ENCODE measurements at regions of chr7 and their contacts with region 1.

Region 1: GRCh38 chr7:38660427-38661099 is 29.4 kb upstream of the AMPH start:
- DNase-seq: peak; percentile 56
- ATAC-seq: peak; percentile 94
- H3K4me3 ChIP-seq: no peak overlapping the region
- H3K27ac ChIP-seq: no peak overlapping the region
- H3K4me1 ChIP-seq: no peaks in the 10 kb centered on the region
- H3K27me3 ChIP-seq: no peaks in the 10 kb centered on the region; the same call in 1 of the 2 replicates
- CTCF ChIP-seq: peak; percentile 83
- POLR2A ChIP-seq: no peak
- RAD21 ChIP-seq: peak; percentile 82

Region 2: DNA sequence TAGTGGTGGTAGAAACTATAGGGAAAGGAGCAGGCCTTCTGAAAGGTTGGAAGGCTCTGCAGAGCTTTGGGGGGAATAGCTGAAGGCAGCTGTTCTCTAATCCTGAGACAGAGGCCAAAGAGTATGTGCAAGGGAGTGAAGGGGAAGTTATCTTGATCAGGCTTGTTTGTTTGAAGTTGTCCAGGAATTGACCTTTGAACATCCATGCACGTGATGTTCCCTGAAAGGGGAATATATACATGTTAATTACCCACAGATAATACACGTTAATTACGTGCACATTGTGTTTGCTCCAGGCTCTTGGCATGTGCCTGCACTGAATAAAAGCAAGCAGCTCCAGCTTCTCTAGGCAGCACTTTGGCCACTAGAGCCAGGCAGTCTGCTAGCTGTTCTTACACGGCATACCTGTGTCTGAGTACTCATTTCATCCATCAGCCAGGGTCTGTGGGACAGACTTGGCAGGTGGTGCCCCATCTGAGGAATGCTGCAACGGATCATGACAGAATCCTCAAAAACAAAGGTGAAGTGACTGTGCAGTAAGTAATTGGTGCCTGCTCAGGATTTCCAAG is 500.5 kb before region 1 on chr7:
- CTCF ChIA-PET with region 1: no interaction called
- POLR2A ChIA-PET with region 1: no interaction called
- dilution Hi-C with region 1: no loop called
- in situ Hi-C with region 1: no loop called
- intact Hi-C with region 1: no loop called
- DNase-seq: no peak
- ATAC-seq: no peak
- H3K4me3 ChIP-seq: no peak overlapping the region
- H3K27ac ChIP-seq: no peak overlapping the region
- H3K4me1 ChIP-seq: no peaks in the 10 kb centered on the region
- H3K27me3 ChIP-seq: no peaks in the 10 kb centered on the region
- CTCF ChIP-seq: no peak
- POLR2A ChIP-seq: no peak
- RAD21 ChIP-seq: no peak

Region 3: GRCh38 chr7:38398725-38399321 is 261.7 kb before region 1 on chr7:
- CTCF ChIA-PET with region 1: interaction called, 11 read pairs
- POLR2A ChIA-PET with region 1: no interaction called
- dilution Hi-C with region 1: no loop called
- in situ Hi-C with region 1: loop called (anchors 5 kb)
- intact Hi-C with region 1: loop called (anchors 1 kb)
- DNase-seq: peak; percentile 48
- ATAC-seq: peak; percentile 94
- H3K4me3 ChIP-seq: no peak overlapping the region
- H3K27ac ChIP-seq: no peak overlapping the region
- H3K4me1 ChIP-seq: no peaks in the 10 kb centered on the region
- H3K27me3 ChIP-seq: no peaks in the 10 kb centered on the region
- CTCF ChIP-seq: peak; percentile 90
- POLR2A ChIP-seq: no peak
- RAD21 ChIP-seq: peak; percentile 73

Region 4: GRCh38 chr7:38451840-38452239 is 208.7 kb before region 1 on chr7:
- CTCF ChIA-PET with region 1: interaction called, 5 read pairs
- POLR2A ChIA-PET with region 1: no interaction called
- dilution Hi-C with region 1: no loop called
- in situ Hi-C with region 1: no loop called
- intact Hi-C with region 1: loop called (anchors 1 kb)
- DNase-seq: peak; percentile 62
- ATAC-seq: peak; percentile 61
- H3K4me3 ChIP-seq: no peak overlapping the region
- H3K27ac ChIP-seq: no peak overlapping the region
- H3K4me1 ChIP-seq: peaks cover 9% of the 10 kb centered on the region; the same call in 1 of the 2 replicates
- H3K27me3 ChIP-seq: no peaks in the 10 kb centered on the region
- CTCF ChIP-seq: peak; percentile 53
- POLR2A ChIP-seq: no peak
- RAD21 ChIP-seq: peak; percentile 45